Activated CD4-positive, alpha-beta memory T cell treated with anti-CD3 and anti-CD28 coated beads for 36 hours (primary cell): ENCODE measurements at regions of chr12 and their contacts with region 1.

Region 1: DNA sequence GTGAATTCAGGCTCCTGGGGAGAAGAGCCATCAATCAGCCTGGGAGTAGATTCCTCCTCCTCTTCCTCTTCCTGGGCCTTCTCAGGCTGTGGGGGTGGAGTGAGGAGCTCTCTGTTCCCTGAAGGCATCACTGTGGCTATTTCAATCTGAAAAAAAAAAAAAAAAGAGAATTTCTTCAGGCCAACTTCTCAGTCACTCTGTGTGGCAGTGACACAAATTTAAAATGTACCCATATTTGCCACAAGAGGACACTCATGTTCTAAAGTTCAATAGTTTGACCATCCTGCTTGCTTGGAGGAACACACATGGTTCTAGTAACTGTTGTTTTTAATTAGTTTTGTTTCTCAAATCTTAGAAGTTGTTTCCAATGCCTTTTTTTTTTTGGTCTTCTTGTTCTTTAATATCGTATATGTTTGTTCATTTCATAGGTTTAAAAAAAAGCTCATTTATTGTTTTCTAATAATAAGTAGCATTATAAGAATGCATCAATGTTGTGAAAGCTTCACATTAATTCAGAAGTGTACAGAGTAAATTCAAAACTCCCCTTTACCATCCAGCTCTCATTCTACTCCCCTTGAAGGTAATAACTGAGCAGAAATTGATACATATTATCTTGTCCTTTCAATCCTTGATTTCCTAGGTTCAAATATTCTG is 23.3 kb upstream of the CCER1 start:
- DNase-seq: no peak
- H3K4me3 Mint-ChIP-seq: no peak overlapping the region
- H3K27ac Mint-ChIP-seq: no peak overlapping the region
- H3K4me1 Mint-ChIP-seq: no peaks in the 10 kb centered on the region
- H3K27me3 Mint-ChIP-seq: no peaks in the 10 kb centered on the region

Region 2: GRCh38 chr12:91109148-91109564 is 130.9 kb after region 1 on chr12:
- CTCF ChIA-PET with region 1: interaction called, 20 read pairs
- POLR2A ChIA-PET with region 1: no interaction called
- intact Hi-C with region 1: no loop called
- DNase-seq: peak; percentile 71
- H3K4me3 Mint-ChIP-seq: no peak overlapping the region
- H3K27ac Mint-ChIP-seq: no peak overlapping the region
- H3K4me1 Mint-ChIP-seq: no peaks in the 10 kb centered on the region
- H3K27me3 Mint-ChIP-seq: peaks cover 3% of the 10 kb centered on the region